GM12878 (cell line): ENCODE measurements at regions of chr4 and their contacts with region 1.

Region 1: GRCh38 chr4:37891260-37892159 is 626 bp downstream of the TBC1D1 start:
- DNase-seq: peak; percentile 79
- ATAC-seq: peak; percentile 69
- H3K4me3 ChIP-seq: peak overlapping the region; percentile 59
- H3K27ac ChIP-seq: peak overlapping the region; percentile 70
- H3K4me1 ChIP-seq: peaks cover 18% of the 10 kb centered on the region
- H3K27me3 ChIP-seq: no peaks in the 10 kb centered on the region
- CTCF ChIP-seq: peak in 1 of 3 experiments; percentile 15; a peak in 1 of 6 replicates
- EP300 ChIP-seq: peak in 1 of 2 experiments; percentile 70; a peak in 1 of 4 replicates
- POLR2A ChIP-seq: peak; percentile 72
- RAD21 ChIP-seq: no peak

Region 2: GRCh38 chr4:37686373-37687193 is 204.9 kb before region 1 on chr4 and contains the start of gene RELL1:
- CTCF ChIA-PET with region 1: interaction called, 4 read pairs
- POLR2A ChIA-PET with region 1: interaction called, 3 read pairs
- RAD21 ChIA-PET with region 1: no interaction called
- SMC1A ChIA-PET with region 1: interaction called, 3 read pairs
- in situ Hi-C with region 1: no loop called
- intact Hi-C with region 1: loop called (anchors 5 kb)
- DNase-seq: peak; percentile 97
- ATAC-seq: peak; percentile 89
- H3K4me3 ChIP-seq: peak within 1 kb of the TSS; percentile 87
- H3K27ac ChIP-seq: peak within 1 kb of the TSS; percentile 67
- H3K4me1 ChIP-seq: peaks cover 11% of the 10 kb centered on the region
- H3K27me3 ChIP-seq: no peaks in the 10 kb centered on the region
- CTCF ChIP-seq: no peak
- EP300 ChIP-seq: no peak
- POLR2A ChIP-seq: no peak
- RAD21 ChIP-seq: no peak
- polyA plus RNA-seq, gene RELL1: 0.20 to 0.26 TPM

Region 3: GRCh38 chr4:37826295-37827029 is 65.0 kb before region 1 on chr4 and contains the start of gene PGM2:
- CTCF ChIA-PET with region 1: interaction called, 5 read pairs
- POLR2A ChIA-PET with region 1: interaction called, 14 read pairs
- RAD21 ChIA-PET with region 1: interaction called, 28 read pairs
- SMC1A ChIA-PET with region 1: interaction called, 7 read pairs
- in situ Hi-C with region 1: no loop called
- intact Hi-C with region 1: loop called (anchors 2 kb)
- DNase-seq: peak; percentile 45
- ATAC-seq: peak; percentile 98
- H3K4me3 ChIP-seq: peak within 1 kb of the TSS; percentile 79
- H3K27ac ChIP-seq: peak within 1 kb of the TSS; percentile 66
- H3K4me1 ChIP-seq: 0 out of 2 replicates have a peak, but pooled peaks cover 5% of the 10 kb centered on the region
- H3K27me3 ChIP-seq: no peaks in the 10 kb centered on the region
- CTCF ChIP-seq: 0 out of 6 replicates have a peak, but pooled peaks of 1 of the 3 experiments have one; percentile 7
- EP300 ChIP-seq: no peak
- POLR2A ChIP-seq: peak; percentile 100
- RAD21 ChIP-seq: 0 out of 2 replicates have a peak, but pooled peaks have one; percentile 5
- polyA plus RNA-seq, gene PGM2: 11.9 to 15.1 TPM

Region 4: GRCh38 chr4:37852376-37852775 is 39.1 kb before region 1 on chr4:
- CTCF ChIA-PET with region 1: interaction called, 3 read pairs
- POLR2A ChIA-PET with region 1: interaction called, 4 read pairs
- RAD21 ChIA-PET with region 1: interaction called, 10 read pairs
- SMC1A ChIA-PET with region 1: interaction called, 6 read pairs
- in situ Hi-C with region 1: no loop called
- intact Hi-C with region 1: no loop called
- DNase-seq: no peak
- ATAC-seq: no peak
- H3K4me3 ChIP-seq: no peak overlapping the region
- H3K27ac ChIP-seq: no peak overlapping the region
- H3K4me1 ChIP-seq: peaks cover 2% of the 10 kb centered on the region; the same call in 1 of the 2 replicates
- H3K27me3 ChIP-seq: no peaks in the 10 kb centered on the region
- CTCF ChIP-seq: no peak
- EP300 ChIP-seq: no peak
- POLR2A ChIP-seq: no peak
- RAD21 ChIP-seq: no peak

Region 5: DNA sequence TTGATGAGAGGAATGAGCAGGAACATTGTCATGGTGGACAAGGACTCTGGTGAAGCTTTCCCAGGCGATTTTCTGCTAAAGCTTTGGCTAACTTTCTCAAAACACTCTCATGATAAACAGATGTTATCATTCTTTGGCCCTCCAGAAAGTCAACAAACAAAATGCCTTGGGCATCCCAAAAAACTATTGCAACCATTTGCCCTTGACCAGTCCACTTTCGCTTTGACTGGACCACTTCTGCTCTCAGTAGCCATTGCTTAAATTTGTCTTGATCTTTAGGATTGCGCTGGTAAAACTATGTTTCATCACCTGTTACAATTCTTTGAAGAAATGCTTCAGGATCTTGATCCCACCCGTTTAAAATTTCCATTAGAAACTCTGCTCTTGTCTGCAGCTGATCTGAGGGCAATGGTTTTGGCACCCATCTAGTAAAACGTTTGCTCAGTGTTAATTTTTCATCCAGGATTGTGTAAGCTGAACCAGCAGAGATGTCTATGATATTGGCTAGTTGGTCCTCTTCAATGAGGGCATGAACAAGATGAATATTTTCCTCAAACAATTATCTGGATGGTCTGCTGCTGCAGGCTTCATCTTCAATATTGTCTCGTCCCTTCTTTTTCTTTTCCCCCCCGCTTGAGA is 14.1 kb after region 1 on chr4:
- CTCF ChIA-PET with region 1: interaction called, 15 read pairs
- POLR2A ChIA-PET with region 1: interaction called, 8 read pairs
- RAD21 ChIA-PET with region 1: interaction called, 4 read pairs
- SMC1A ChIA-PET with region 1: interaction called, 12 read pairs
- in situ Hi-C with region 1: no loop called
- intact Hi-C with region 1: no loop called
- DNase-seq: no peak
- ATAC-seq: 0 out of 3 replicates have a peak, but pooled peaks have one; percentile 29
- H3K4me3 ChIP-seq: no peak overlapping the region
- H3K27ac ChIP-seq: no peak overlapping the region
- H3K4me1 ChIP-seq: no peaks in the 10 kb centered on the region
- H3K27me3 ChIP-seq: no peaks in the 10 kb centered on the region
- CTCF ChIP-seq: no peak
- EP300 ChIP-seq: no peak
- POLR2A ChIP-seq: no peak
- RAD21 ChIP-seq: no peak